CD4-positive, alpha-beta memory T cell (primary cell): ENCODE measurements at regions of chr13 and their contacts with region 1.

Region 1: GRCh38 chr13:44917589-44918325 is 71.5 kb downstream of the NUFIP1 start:
- DNase-seq: peak; percentile 96 to 97 (median 97)
- H3K4me3 ChIP-seq: peak overlapping the region; percentile 76 to 85
- H3K4me3 Mint-ChIP-seq: no peak overlapping the region
- H3K27ac ChIP-seq: peak overlapping the region; percentile 72
- H3K27ac Mint-ChIP-seq: no peak overlapping the region
- H3K4me1 ChIP-seq: peaks cover 10% of the 10 kb centered on the region
- H3K4me1 Mint-ChIP-seq: peaks cover 0 to 7% (median 3%) of the 10 kb centered on the region in 4 donors
- H3K27me3 ChIP-seq: no peaks in the 10 kb centered on the region
- H3K27me3 Mint-ChIP-seq: no peaks in the 10 kb centered on the region

Region 2: GRCh38 chr13:44141725-44142539 is 775.8 kb before region 1 on chr13:
- CTCF ChIA-PET with region 1: no interaction called
- POLR2A ChIA-PET with region 1: interaction called, 3 read pairs
- intact Hi-C with region 1: loop called (anchors 5 kb)
- DNase-seq: peak; percentile 87 to 94 (median 89)
- H3K4me3 ChIP-seq: peak overlapping the region; percentile 59 to 79
- H3K4me3 Mint-ChIP-seq: peak overlapping the region; percentile 90 to 98 (median 94)
- H3K27ac ChIP-seq: peak overlapping the region; percentile 83
- H3K27ac Mint-ChIP-seq: peak overlapping the region; percentile 76 to 97 (median 96)
- H3K4me1 ChIP-seq: peaks cover 14% of the 10 kb centered on the region
- H3K4me1 Mint-ChIP-seq: peaks cover 9 to 16% (median 13%) of the 10 kb centered on the region in 4 donors
- H3K27me3 ChIP-seq: no peaks in the 10 kb centered on the region
- H3K27me3 Mint-ChIP-seq: peaks cover 5 to 7% of the 10 kb centered on the region in 2 donors

Region 3: DNA sequence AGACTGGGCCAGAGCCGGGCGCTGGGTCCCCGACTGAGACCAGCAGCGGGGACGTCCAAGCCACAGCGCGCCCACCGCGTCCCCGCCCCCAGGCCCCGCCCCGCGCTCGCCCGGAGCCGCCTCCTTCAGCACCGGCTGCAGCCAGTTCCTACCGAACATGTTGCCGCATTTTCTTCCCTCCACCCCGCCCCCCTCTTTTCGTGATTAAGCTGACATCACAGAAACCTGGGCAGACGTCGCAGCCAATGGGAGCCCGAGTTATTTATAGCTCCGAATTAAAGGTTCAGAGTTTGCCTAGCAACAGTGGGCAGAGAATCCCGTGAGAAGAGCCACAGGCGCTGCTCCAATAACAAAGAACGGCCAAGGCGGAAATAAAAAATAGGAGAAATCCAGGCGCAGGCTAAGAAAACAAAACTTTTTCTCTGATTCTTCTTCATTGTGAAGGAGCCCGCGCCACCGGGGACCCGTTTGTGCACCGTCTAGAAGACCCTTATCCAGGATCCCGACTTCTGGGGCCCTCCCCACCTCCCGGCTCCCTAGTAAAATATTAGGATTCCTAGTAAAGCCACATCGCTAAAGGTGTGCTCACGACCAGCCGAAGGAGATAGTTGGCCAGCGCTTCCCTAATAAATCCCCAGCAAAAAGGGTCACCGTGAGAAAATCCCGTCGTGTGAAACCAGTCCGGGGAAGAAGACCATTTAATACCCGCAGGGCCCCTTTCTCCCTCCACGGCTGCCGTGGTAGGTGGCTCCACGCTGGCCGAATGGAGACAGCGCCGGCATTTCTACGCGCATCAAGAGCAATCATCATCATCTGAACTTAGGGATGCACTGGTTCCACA is 482.4 kb before region 1 on chr13:
- CTCF ChIA-PET with region 1: no interaction called
- POLR2A ChIA-PET with region 1: interaction called, 3 read pairs
- intact Hi-C with region 1: loop called (anchors 2 kb)
- DNase-seq: peak; percentile 77 to 96 (median 82)
- H3K4me3 ChIP-seq: peak overlapping the region; percentile 54 to 63
- H3K4me3 Mint-ChIP-seq: peak overlapping the region; percentile 87 to 93 (median 90)
- H3K27ac ChIP-seq: peak overlapping the region; percentile 23
- H3K27ac Mint-ChIP-seq: peak overlapping the region; percentile 44 to 92 (median 89)
- H3K4me1 ChIP-seq: peaks cover 30% of the 10 kb centered on the region
- H3K4me1 Mint-ChIP-seq: peaks cover 15 to 35% (median 22%) of the 10 kb centered on the region in 4 donors
- H3K27me3 ChIP-seq: peaks cover 14% of the 10 kb centered on the region
- H3K27me3 Mint-ChIP-seq: peaks cover 6 to 9% of the 10 kb centered on the region in 2 donors

Region 4: DNA sequence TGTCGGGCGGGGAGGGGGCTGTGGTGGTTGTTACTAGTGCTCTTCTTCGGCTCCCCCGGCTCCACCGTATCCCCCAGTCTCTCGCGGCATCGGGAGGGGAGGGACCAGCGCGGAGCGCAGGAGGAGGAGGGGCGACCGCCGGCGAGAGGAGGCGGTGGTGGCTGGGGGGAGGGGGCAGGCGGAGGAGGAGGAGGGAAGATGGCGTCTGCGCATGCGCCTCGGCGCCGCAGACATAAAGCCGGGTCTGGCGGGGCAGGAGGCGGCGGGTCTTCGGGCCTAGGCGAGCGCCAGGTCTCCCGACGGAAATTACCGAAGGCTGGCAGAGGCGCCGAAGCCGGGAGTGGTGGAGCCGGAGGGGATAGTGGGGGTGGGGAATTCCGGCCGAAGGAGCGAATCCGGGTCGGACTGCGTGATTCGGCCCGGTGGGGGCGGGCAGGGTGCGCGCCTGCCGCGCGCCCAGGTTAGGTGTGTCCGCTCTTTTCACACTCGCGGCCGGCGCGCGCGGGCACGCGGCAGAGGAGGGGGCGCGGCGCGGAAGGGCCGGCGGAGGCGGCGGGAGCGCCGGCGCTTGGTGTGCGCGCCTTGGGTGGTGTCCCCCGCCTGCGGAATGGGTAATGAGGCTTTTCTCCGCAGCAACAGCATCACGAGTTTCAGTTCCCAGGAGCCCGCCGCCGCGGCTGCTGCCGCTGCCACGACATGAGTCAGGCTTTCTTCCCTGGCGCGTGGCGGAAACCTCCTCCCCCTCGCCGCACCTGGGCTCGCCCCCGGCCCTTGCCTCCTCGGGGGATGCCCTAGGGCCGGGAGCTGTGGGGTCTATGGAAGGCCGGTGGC is 340.3 kb before region 1 on chr13:
- CTCF ChIA-PET with region 1: interaction called, 5 read pairs
- POLR2A ChIA-PET with region 1: interaction called, 12 read pairs
- intact Hi-C with region 1: loop called (anchors 1 kb)
- DNase-seq: peak; percentile 93 to 96 (median 94)
- H3K4me3 ChIP-seq: peak overlapping the region; percentile 47 to 86
- H3K4me3 Mint-ChIP-seq: peak overlapping the region; percentile 88 to 97 (median 94)
- H3K27ac ChIP-seq: peak overlapping the region; percentile 84
- H3K27ac Mint-ChIP-seq: peak overlapping the region; percentile 91 to 97 (median 95)
- H3K4me1 ChIP-seq: peaks cover 39% of the 10 kb centered on the region
- H3K4me1 Mint-ChIP-seq: peaks cover 28 to 46% (median 38%) of the 10 kb centered on the region in 4 donors
- H3K27me3 ChIP-seq: no peaks in the 10 kb centered on the region
- H3K27me3 Mint-ChIP-seq: no peaks in the 10 kb centered on the region

Region 5: GRCh38 chr13:44969551-44970484 is 52.1 kb after region 1 on chr13:
- CTCF ChIA-PET with region 1: interaction called, 9 read pairs
- POLR2A ChIA-PET with region 1: no interaction called
- intact Hi-C with region 1: loop called (anchors 1 kb)
- DNase-seq: peak in 4 of 5 donors; percentile 13 to 28 (median 18)
- H3K4me3 ChIP-seq: no peak overlapping the region
- H3K4me3 Mint-ChIP-seq: no peak overlapping the region
- H3K27ac ChIP-seq: no peak overlapping the region
- H3K27ac Mint-ChIP-seq: no peak overlapping the region
- H3K4me1 ChIP-seq: no peaks in the 10 kb centered on the region
- H3K4me1 Mint-ChIP-seq: peaks cover 0 to 1% (median under 1%) of the 10 kb centered on the region in 4 donors
- H3K27me3 ChIP-seq: no peaks in the 10 kb centered on the region
- H3K27me3 Mint-ChIP-seq: no peaks in the 10 kb centered on the region

Region 6: GRCh38 chr13:45119991-45120864 is 202.5 kb after region 1 on chr13 and contains the start of gene GTF2F2:
- CTCF ChIA-PET with region 1: no interaction called
- POLR2A ChIA-PET with region 1: no interaction called
- intact Hi-C with region 1: loop called (anchors 1 kb)
- DNase-seq: peak; percentile 86 to 89 (median 87)
- H3K4me3 ChIP-seq: peak within 1 kb of the TSS; percentile 83 to 88
- H3K4me3 Mint-ChIP-seq: no peak within 1 kb of the TSS
- H3K27ac ChIP-seq: peak within 1 kb of the TSS; percentile 90
- H3K27ac Mint-ChIP-seq: no peak within 1 kb of the TSS
- H3K4me1 ChIP-seq: peaks cover 28% of the 10 kb centered on the region
- H3K4me1 Mint-ChIP-seq: peaks cover 6 to 21% (median 11%) of the 10 kb centered on the region in 4 donors
- H3K27me3 ChIP-seq: no peaks in the 10 kb centered on the region
- H3K27me3 Mint-ChIP-seq: no peaks in the 10 kb centered on the region
- total RNA-seq, gene GTF2F2: 12.3 to 14.7 TPM

Region 7: DNA sequence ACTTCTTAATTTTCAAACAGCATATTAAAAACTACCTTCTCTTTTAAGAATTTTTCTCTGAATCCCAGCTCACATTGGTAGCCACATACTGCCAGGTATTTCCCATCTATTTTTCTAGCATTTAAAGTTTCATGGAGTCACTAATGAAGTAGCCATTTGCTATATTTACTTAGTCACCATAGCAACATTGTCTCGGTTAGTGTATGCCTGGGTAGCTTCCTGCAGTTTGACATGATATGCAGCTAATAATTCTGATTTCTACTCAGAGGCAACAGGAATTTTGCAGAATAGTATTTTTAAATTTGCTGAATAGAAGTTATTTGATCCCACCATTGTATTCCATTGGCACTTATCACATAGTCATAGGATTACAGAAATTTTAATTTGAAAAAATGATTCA is 314.0 kb after region 1 on chr13:
- CTCF ChIA-PET with region 1: no interaction called
- POLR2A ChIA-PET with region 1: no interaction called
- intact Hi-C with region 1: no loop called
- DNase-seq: no peak
- H3K4me3 ChIP-seq: no peak overlapping the region
- H3K4me3 Mint-ChIP-seq: no peak overlapping the region
- H3K27ac ChIP-seq: no peak overlapping the region
- H3K27ac Mint-ChIP-seq: no peak overlapping the region
- H3K4me1 ChIP-seq: no peaks in the 10 kb centered on the region
- H3K4me1 Mint-ChIP-seq: peaks cover 0 to 11% (median 8%) of the 10 kb centered on the region in 4 donors
- H3K27me3 ChIP-seq: no peaks in the 10 kb centered on the region
- H3K27me3 Mint-ChIP-seq: no peaks in the 10 kb centered on the region

Region 8: GRCh38 chr13:46796515-46797474 is 1879.0 kb after region 1 on chr13 and contains the start of gene ESD:
- CTCF ChIA-PET with region 1: no interaction called
- POLR2A ChIA-PET with region 1: no interaction called
- intact Hi-C with region 1: loop called (anchors 10 kb)
- DNase-seq: peak; percentile 80 to 91 (median 85)
- H3K4me3 ChIP-seq: peak within 1 kb of the TSS; percentile 84 to 89
- H3K4me3 Mint-ChIP-seq: peak within 1 kb of the TSS; percentile 90 to 99 (median 98)
- H3K27ac ChIP-seq: peak within 1 kb of the TSS; percentile 72
- H3K27ac Mint-ChIP-seq: peak within 1 kb of the TSS; percentile 93 to 99 (median 99)
- H3K4me1 ChIP-seq: peaks cover 44% of the 10 kb centered on the region
- H3K4me1 Mint-ChIP-seq: peaks cover 21 to 45% (median 36%) of the 10 kb centered on the region in 4 donors
- H3K27me3 ChIP-seq: no peaks in the 10 kb centered on the region
- H3K27me3 Mint-ChIP-seq: no peaks in the 10 kb centered on the region
- total RNA-seq, gene ESD: 57.5 to 61.2 TPM